Psoas muscle (tissue), 8 donors: ENCODE measurements at regions of chr3 and their contacts with region 1.

Region 1: DNA sequence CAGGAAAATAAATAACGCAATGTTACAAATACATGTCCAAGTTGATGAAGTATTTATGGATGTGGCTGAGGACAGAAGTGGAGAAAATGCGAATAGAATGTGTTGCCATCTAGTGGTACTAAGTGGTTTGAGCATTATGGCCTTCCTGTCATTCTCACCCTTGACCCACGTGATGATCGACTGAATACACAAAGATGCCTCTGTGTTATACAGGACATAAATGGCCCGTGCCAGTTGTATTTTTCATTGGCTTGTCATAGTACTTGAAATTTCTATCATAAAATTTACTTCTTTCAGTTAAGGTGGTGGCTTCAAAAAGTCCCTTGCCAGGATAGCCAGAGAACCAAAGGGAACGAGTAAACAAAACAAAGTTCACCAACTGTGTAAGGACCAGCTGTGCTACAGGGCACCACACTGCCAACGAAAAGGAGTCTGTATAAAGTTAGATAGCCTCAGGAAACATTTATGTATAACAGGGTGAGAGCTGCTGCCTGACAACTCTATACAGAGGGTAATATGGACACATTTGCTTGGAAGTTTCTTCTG is 103.7 kb downstream of the MYH15 start:
- DNase-seq: no peak
- ATAC-seq: peak; percentile 65 to 75 (median 71)
- H3K4me3 ChIP-seq: no peak overlapping the region
- H3K27ac ChIP-seq: no peak overlapping the region
- H3K4me1 ChIP-seq: no peaks in the 10 kb centered on the region
- H3K27me3 ChIP-seq: no peaks in the 10 kb centered on the region
- CTCF ChIP-seq: peak; percentile 80

Region 2: DNA sequence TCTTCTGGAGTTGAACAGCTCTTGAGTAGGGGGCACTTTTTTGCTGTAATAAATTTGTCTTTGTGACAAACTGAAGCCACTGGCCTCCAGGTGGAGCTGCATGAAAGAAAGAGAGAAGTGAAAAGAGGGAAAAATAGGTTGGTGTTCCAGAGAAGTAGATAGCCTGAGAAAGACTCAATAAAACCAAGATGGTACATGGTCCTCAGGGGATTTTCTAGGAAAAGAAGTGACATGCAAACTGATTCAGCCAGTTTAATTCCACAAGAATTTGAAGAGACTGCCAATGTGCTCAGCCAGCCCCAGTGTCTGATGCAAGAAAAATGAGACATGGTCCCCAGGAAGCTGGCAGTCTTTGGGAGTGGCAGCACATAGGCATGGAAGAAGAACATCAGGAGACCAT is 468.6 kb before region 1 on chr3:
- intact Hi-C with region 1: loop called in 1 of 2 experiments (anchors 5 kb)
- DNase-seq: no peak
- ATAC-seq: peak in 2 of 4 donors; percentile 28 to 46
- H3K4me3 ChIP-seq: no peak overlapping the region
- H3K27ac ChIP-seq: no peak overlapping the region
- H3K4me1 ChIP-seq: no peaks in the 10 kb centered on the region
- H3K27me3 ChIP-seq: no peaks in the 10 kb centered on the region
- CTCF ChIP-seq: peak; percentile 37

Region 3: DNA sequence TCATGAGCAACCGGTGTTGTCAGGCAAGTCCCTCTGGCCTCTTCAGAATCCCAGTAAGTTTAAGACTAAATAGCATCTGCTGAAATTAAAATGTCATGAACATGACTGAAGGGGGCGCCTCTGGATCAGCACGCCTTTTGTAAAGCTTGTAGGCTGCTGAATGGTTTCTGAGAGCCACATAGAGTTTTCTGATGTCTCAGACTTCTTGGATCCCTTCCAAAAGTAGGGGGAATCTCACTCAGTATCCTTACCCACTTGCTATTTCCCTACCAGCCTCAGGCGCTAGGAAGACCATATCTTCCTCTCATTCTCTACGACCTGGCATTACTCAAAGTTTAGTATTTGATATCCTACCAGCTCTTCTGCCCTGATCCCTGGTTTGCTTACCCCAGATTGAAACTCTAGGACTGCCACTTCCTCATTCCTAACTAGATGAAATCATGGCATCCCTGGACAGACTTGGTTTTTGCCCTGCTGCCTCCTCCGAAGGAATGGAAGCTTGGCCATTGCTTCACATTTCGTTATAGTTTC is 253.2 kb before region 1 on chr3:
- intact Hi-C with region 1: loop called in 1 of 2 experiments (anchors 10 kb)
- DNase-seq: no peak
- ATAC-seq: no peak
- H3K4me3 ChIP-seq: no peak overlapping the region
- H3K27ac ChIP-seq: no peak overlapping the region
- H3K4me1 ChIP-seq: no peaks in the 10 kb centered on the region
- H3K27me3 ChIP-seq: no peaks in the 10 kb centered on the region
- CTCF ChIP-seq: no peak

Region 4: GRCh38 chr3:108322352-108322751 is 84.4 kb before region 1 on chr3:
- intact Hi-C with region 1: no loop called
- DNase-seq: no peak
- ATAC-seq: no peak
- H3K4me3 ChIP-seq: no peak overlapping the region
- H3K27ac ChIP-seq: no peak overlapping the region
- H3K4me1 ChIP-seq: no peaks in the 10 kb centered on the region
- H3K27me3 ChIP-seq: no peaks in the 10 kb centered on the region
- CTCF ChIP-seq: no peak

Region 5: DNA sequence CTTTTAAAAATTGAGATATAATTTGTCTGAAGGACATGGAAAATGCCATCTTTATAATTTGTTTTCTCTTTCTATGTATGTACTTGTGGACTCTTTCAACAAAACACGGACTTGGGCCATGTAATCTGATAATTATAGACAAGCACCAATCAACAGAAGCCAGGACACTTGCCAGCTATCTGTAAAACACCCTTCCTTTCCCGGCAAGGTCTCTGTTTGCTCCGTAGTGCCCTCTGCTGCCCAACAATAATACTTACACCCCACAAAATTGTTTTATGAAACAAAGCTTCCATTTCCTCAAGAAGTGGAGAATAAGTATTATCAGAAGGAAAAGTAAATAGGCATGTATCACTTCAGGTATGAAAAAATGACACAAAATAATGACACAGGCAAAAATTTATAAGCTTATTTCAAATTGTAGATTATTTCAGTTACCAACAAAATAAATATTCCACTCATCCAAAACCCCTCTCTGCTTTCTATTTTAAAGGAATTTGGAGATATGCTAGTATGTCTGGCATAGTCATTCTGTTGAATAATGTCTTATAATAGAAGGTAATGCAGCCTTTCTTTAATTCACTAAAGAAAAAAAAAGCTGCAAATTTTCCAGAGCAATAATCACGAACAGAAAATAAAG is 70.9 kb after region 1 on chr3:
- intact Hi-C with region 1: no loop called
- DNase-seq: peak in 1 of 2 donors; percentile 26
- ATAC-seq: peak; percentile 64 to 85 (median 80)
- H3K4me3 ChIP-seq: no peak overlapping the region
- H3K27ac ChIP-seq: no peak overlapping the region
- H3K4me1 ChIP-seq: no peaks in the 10 kb centered on the region
- H3K27me3 ChIP-seq: peaks cover 0 to 2% (median 0%) of the 10 kb centered on the region in 3 donors
- CTCF ChIP-seq: peak; percentile 56

Region 6: GRCh38 chr3:108780235-108780634 is 373.5 kb after region 1 on chr3:
- intact Hi-C with region 1: no loop called
- DNase-seq: no peak
- ATAC-seq: no peak
- H3K4me3 ChIP-seq: no peak overlapping the region
- H3K27ac ChIP-seq: no peak overlapping the region
- H3K4me1 ChIP-seq: no peaks in the 10 kb centered on the region
- H3K27me3 ChIP-seq: no peaks in the 10 kb centered on the region
- CTCF ChIP-seq: no peak